PC-3 (cell line): ENCODE measurements at regions of chr4 and their contacts with region 1.

Region 1: GRCh38 chr4:34157547-34157946 is 2086.8 kb downstream of the ARAP2 start:
- DNase-seq: peak; percentile 37
- ATAC-seq: peak; percentile 40; the same call in 1 of the 2 replicates
- H3K4me3 ChIP-seq: no peak overlapping the region
- H3K27ac ChIP-seq: no peak overlapping the region
- H3K4me1 ChIP-seq: no peaks in the 10 kb centered on the region; the same call in 1 of the 2 replicates
- H3K27me3 ChIP-seq: no peaks in the 10 kb centered on the region
- CTCF ChIP-seq: no peak

Region 2: GRCh38 chr4:33772582-33772981 is 385.0 kb before region 1 on chr4:
- CTCF ChIA-PET with region 1: no interaction called
- POLR2A ChIA-PET with region 1: no interaction called
- intact Hi-C with region 1: no loop called
- DNase-seq: no peak
- ATAC-seq: no peak
- H3K4me3 ChIP-seq: no peak overlapping the region
- H3K27ac ChIP-seq: no peak overlapping the region
- H3K4me1 ChIP-seq: no peaks in the 10 kb centered on the region
- H3K27me3 ChIP-seq: no peaks in the 10 kb centered on the region
- CTCF ChIP-seq: no peak

Region 3: GRCh38 chr4:34181311-34181808 is 23.8 kb after region 1 on chr4:
- CTCF ChIA-PET with region 1: no interaction called
- POLR2A ChIA-PET with region 1: no interaction called
- intact Hi-C with region 1: loop called (anchors 1 kb)
- DNase-seq: peak; percentile 85
- ATAC-seq: peak; percentile 86
- H3K4me3 ChIP-seq: peak overlapping the region; percentile 34; the same call in 1 of the 2 replicates
- H3K27ac ChIP-seq: peak overlapping the region; percentile 91
- H3K4me1 ChIP-seq: peaks cover 37% of the 10 kb centered on the region
- H3K27me3 ChIP-seq: no peaks in the 10 kb centered on the region
- CTCF ChIP-seq: no peak